ENCODE measurements at regions of chr5 and their contacts with region 1.

Region 1: GRCh38 chr5:147576646-147577535 is 67.0 kb upstream of the DPYSL3 start:
- DNase-seq: no peak
- H3K4me3 ChIP-seq: no peak overlapping the region
- H3K27ac ChIP-seq: no peak overlapping the region
- H3K27me3 ChIP-seq: peaks cover 2% of the 10 kb centered on the region
- CTCF ChIP-seq: peak; percentile 98

Region 2: GRCh38 chr5:147216552-147217154 is 360.2 kb before region 1 on chr5:
- CTCF ChIA-PET with region 1: interaction called, 169 read pairs
- POLR2A ChIA-PET with region 1: no interaction called
- DNase-seq: no peak
- H3K4me3 ChIP-seq: no peak overlapping the region
- H3K27ac ChIP-seq: no peak overlapping the region
- H3K27me3 ChIP-seq: no peaks in the 10 kb centered on the region
- CTCF ChIP-seq: no peak

Region 3: GRCh38 chr5:147369742-147370374 is 207.0 kb before region 1 on chr5:
- CTCF ChIA-PET with region 1: interaction called, 91 read pairs
- POLR2A ChIA-PET with region 1: no interaction called
- DNase-seq: no peak
- H3K4me3 ChIP-seq: no peak overlapping the region
- H3K27ac ChIP-seq: no peak overlapping the region
- H3K27me3 ChIP-seq: peaks cover 2% of the 10 kb centered on the region
- CTCF ChIP-seq: peak; percentile 61

Region 4: GRCh38 chr5:147410496-147411355 is 166.2 kb before region 1 on chr5:
- CTCF ChIA-PET with region 1: interaction called, 19 read pairs
- POLR2A ChIA-PET with region 1: no interaction called
- DNase-seq: no peak
- H3K4me3 ChIP-seq: no peak overlapping the region
- H3K27ac ChIP-seq: no peak overlapping the region
- H3K27me3 ChIP-seq: no peaks in the 10 kb centered on the region
- CTCF ChIP-seq: no peak

Region 5: DNA sequence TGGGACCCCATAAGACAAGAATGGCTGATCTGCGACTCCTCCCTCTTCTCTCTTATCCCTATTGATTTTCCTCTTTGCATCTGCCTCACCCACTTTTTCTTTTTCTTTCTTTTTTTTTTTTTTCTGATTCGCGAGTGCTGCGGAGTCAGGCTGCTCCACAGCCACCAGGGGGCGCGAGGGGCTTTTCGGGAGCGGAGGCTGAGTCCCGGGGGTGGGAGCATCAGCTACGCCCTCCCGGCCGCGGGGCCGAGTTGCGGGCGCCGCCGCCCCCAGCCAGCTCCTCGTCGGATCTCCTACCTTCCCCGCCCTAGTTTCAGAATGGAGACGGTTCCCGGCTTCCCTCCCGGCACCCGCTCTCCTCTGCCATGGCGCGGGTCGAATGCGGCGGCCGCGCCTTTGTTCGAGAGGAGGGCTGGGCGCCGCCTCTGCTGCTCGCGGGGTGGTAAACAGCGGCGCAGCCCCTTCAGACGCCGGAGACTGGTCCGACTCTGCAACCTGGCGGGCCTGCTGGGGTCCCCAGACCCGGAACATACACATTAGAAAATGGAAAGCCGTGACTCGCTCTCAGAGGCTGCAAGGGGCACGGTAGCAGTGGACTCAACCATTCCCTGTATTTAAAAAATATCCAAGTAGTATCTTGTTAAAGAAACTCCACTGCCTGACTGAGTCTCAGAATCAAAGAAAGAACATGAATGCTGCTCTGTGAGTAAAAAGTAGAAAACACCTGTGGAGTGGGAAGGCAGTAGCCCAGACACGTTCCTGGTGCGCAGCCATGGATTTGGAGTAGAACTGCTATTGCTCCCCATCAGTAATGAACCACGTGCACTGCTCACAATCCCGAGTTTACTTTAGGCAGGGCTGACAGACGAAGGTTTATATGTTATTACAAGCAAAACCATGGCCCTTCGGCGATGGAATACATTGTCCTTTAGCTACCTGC is 122.7 kb before region 1 on chr5:
- CTCF ChIA-PET with region 1: interaction called, 79 read pairs
- POLR2A ChIA-PET with region 1: interaction called, 6 read pairs
- DNase-seq: peak; percentile 71
- H3K4me3 ChIP-seq: peak overlapping the region; percentile 84
- H3K27ac ChIP-seq: peak overlapping the region; percentile 86
- H3K27me3 ChIP-seq: no peaks in the 10 kb centered on the region
- CTCF ChIP-seq: peak; percentile 95

Region 6: DNA sequence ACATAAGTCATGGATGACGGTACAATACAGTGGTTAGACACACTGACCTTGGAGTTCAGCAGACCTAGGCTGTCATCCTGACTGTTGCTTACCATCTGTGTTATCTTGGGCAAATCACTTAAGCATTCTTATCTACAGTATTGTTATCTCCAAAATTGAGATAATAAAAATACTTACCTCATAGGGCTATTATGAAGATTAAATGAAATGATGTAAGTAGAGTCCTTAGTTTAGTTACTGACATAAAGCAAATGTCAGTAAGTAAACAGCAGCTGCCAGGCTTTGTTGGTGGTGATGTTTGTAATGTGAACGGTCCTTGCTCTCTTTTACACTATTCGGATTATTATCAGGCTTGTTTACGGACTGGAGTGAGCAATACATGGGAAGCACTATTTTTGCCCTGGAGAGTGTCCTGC is 40.3 kb after region 1 on chr5:
- CTCF ChIA-PET with region 1: interaction called, 10 read pairs
- POLR2A ChIA-PET with region 1: no interaction called
- DNase-seq: no peak
- H3K4me3 ChIP-seq: no peak overlapping the region
- H3K27ac ChIP-seq: no peak overlapping the region
- H3K27me3 ChIP-seq: peaks cover 3% of the 10 kb centered on the region
- CTCF ChIP-seq: no peak

Region 7: DNA sequence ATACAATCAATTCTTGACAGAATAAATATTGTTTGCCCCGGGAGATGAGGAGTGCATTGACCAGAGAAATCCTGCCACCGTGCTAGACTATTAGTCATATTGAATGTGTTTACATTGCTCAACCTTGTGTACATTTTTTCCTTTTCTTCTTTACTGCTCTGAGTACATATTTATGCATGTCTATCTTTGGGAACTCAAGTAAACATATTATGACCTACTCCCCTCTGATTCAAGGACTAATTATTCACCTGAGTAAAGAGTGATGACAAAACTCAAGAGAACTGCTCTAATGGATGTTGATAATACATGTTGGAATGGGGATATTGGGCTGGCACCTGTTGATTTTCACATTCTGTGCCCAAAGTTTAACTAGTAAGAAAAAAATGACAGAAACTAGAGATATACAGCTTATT is 258.5 kb after region 1 on chr5:
- CTCF ChIA-PET with region 1: no interaction called
- POLR2A ChIA-PET with region 1: no interaction called
- DNase-seq: no peak
- H3K4me3 ChIP-seq: no peak overlapping the region
- H3K27ac ChIP-seq: no peak overlapping the region
- H3K27me3 ChIP-seq: no peaks in the 10 kb centered on the region
- CTCF ChIP-seq: no peak

Region 8: DNA sequence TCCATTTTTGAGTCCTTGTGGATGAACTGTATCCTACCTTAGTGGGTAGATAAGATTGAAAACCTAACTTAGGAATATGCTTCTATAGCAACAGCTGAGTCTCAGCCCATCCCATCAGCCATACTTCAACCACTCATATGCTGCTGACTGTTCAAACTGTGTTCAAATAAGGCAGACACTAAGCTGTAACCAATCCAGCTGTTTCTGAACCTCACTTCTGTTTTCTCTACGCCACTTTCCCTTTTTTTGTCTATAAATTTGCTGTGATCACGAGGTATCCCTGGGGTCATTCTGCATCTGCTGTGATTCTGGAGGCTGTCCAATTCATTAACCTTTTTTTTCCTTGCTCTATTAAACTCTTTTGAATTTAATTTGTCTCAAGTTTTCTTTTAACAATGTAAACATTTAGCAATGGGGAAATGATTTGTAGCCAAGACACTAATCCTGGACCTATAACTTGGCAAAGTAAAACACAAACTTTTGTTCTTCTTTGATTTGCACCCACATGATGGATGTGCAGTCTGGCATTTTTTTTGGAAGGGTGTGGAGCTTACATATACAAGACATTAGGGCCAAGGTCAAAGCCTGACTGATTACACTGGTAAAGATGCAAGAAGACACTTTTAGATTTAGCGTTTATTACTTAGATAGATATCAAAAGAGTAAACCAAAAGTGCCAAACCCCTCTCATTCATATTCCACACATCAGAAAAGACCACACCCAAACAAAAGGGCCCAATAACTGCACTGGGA is 286.7 kb after region 1 on chr5:
- CTCF ChIA-PET with region 1: no interaction called
- POLR2A ChIA-PET with region 1: no interaction called
- DNase-seq: no peak
- H3K4me3 ChIP-seq: no peak overlapping the region
- H3K27ac ChIP-seq: no peak overlapping the region
- H3K27me3 ChIP-seq: no peaks in the 10 kb centered on the region
- CTCF ChIP-seq: no peak